ENCODE measurements at regions of chr14 and their contacts with region 1.

Region 1: GRCh38 chr14:24725311-24725710 is 91.3 kb upstream of the GZMB start:
- DNase-seq: no peak
- ATAC-seq: no peak
- H3K4me3 ChIP-seq: no peak overlapping the region
- H3K27ac ChIP-seq: no peak overlapping the region
- H3K4me1 ChIP-seq: no peaks in the 10 kb centered on the region
- H3K27me3 ChIP-seq: no peaks in the 10 kb centered on the region
- CTCF ChIP-seq: no peak
- EP300 ChIP-seq: no peak
- POLR2A ChIP-seq: no peak
- RAD21 ChIP-seq: no peak

Region 2: DNA sequence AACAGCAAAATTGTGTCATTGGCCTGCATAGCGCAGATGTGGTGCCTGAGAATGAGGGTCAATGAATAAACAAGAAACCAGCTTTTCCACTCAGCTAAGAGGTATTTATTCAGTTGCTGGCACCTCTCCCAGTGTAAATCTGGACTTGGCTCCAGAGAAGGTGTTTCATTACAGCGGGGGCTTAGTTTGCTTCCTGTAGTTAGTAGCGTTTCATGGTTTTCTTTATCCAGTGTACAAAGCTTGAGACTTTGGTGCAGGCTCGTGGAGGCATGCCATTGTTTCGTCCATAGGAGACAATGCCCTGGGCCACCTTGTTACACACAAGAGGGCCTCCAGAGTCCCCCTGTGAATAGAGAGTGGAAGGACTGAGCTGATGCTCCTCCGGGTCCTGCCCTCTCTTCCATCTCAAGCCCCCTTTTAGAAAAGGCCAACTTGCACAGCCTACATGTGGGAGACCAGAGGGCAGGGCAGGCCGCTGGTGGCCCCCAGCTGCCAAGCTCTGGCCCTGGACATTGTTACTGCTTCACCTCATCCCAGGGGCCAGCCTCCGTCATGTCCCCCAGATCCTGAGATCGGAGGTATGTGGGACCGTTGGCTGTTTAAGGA is 94.3 kb before region 1 on chr14:
- CTCF ChIA-PET with region 1: no interaction called
- POLR2A ChIA-PET with region 1: no interaction called
- in situ Hi-C with region 1: no loop called
- intact Hi-C with region 1: no loop called
- DNase-seq: no peak
- ATAC-seq: no peak
- H3K4me3 ChIP-seq: no peak overlapping the region
- H3K27ac ChIP-seq: no peak overlapping the region
- H3K4me1 ChIP-seq: no peaks in the 10 kb centered on the region
- H3K27me3 ChIP-seq: peaks cover 0 to 4% of the 10 kb centered on the region in 2 experiments; a peak in 1 of 5 replicates
- CTCF ChIP-seq: no peak
- EP300 ChIP-seq: no peak
- POLR2A ChIP-seq: no peak
- RAD21 ChIP-seq: no peak

Region 3: DNA sequence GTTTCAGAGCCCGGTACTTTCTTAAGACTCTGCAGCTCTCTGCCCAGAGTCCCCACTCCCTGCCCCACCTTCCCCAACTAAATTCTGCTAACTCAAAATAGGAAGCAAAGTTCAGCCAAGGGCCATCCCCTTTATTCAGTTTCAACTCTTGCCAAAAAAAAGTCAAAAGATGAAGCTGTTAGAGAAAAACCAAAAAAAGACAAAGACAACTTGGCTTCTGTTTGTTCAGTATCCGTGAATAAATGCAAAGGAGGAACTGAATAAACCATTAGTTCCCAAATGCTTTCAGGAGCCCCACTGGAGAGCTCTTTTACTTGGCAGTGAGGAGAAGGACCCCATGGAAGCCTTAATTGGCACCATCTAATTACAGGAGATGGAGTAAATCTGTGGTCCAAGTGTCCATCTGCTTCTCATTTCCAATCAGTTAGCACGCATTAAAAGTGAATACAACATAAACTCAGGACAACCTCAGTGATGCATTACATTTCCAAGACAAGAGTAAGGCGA is 64.1 kb after region 1 on chr14:
- CTCF ChIA-PET with region 1: no interaction called
- POLR2A ChIA-PET with region 1: no interaction called
- in situ Hi-C with region 1: loop called (anchors 5 kb)
- intact Hi-C with region 1: no loop called
- DNase-seq: no peak
- ATAC-seq: no peak
- H3K4me3 ChIP-seq: no peak overlapping the region
- H3K27ac ChIP-seq: no peak overlapping the region
- H3K4me1 ChIP-seq: no peaks in the 10 kb centered on the region
- H3K27me3 ChIP-seq: no peaks in the 10 kb centered on the region
- CTCF ChIP-seq: no peak
- EP300 ChIP-seq: no peak
- POLR2A ChIP-seq: no peak
- RAD21 ChIP-seq: no peak